ENCODE measurements at regions of chr1 and their contacts with region 1.

Region 1: DNA sequence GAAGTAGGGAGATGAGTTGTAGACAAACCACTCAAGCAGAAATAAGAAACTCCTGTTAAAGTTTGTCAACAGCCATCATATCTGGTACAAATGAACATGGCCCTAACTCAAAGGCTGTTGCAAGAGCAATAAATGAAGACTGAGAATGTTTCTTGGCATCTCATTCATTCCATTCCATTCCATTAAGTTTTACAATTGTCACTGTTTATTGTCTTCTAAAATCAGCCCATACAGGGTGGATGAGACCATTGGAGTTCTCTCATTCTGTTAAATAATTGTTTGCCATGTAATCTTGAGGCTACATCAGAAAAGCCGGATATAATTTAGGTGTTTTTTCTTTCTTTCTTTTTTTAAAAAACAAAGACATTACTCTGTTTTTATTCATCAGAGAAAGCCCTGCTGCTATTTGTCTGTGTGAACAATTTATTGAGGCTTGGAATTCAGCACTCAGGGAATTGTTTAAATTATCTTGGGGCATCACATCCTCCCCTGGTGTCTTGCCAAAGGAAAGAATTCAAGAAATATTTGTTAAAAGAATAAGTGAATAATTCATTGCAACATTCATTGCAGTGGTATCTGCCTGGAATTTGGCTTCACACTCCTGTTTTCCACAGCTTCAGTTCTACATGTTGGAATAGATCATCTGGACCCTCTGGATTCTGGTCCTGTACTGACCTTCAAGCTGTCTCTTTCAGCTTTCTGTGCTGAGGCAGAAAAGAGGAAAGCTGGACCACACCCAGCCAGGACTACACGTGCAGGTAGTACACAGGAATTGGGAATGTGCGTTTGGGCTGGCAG is 604.5 kb downstream of the PLPP3 start:
- DNase-seq: no peak
- CTCF ChIP-seq: no peak

Region 2: GRCh38 chr1:55868026-55868425 is 106.9 kb before region 1 on chr1:
- in situ Hi-C with region 1: loop called (anchors 25 kb)
- DNase-seq: no peak
- CTCF ChIP-seq: no peak

Measured in GM13977 (cell line).